Ascending aorta (tissue), 2 donors: ENCODE measurements at regions of chr14 and their contacts with region 1.

Region 1: GRCh38 chr14:67166450-67166853 is 22.8 kb upstream of the GARIN2 start:
- DNase-seq: no peak
- H3K4me3 ChIP-seq: no peak overlapping the region
- H3K27ac ChIP-seq: no peak overlapping the region
- H3K4me1 ChIP-seq: no peaks in the 10 kb centered on the region
- H3K27me3 ChIP-seq: no peaks in the 10 kb centered on the region
- CTCF ChIP-seq: peak; percentile 56 to 78 (median 58)

Region 2: GRCh38 chr14:67199016-67199415 is 32.6 kb after region 1 on chr14:
- intact Hi-C with region 1: no loop called
- DNase-seq: no peak
- H3K4me3 ChIP-seq: no peak overlapping the region
- H3K27ac ChIP-seq: no peak overlapping the region
- H3K4me1 ChIP-seq: no peaks in the 10 kb centered on the region
- H3K27me3 ChIP-seq: no peaks in the 10 kb centered on the region
- CTCF ChIP-seq: no peak

Region 3: GRCh38 chr14:67285876-67286452 is 119.5 kb after region 1 on chr14:
- intact Hi-C with region 1: loop called (anchors 1 kb)
- DNase-seq: no peak
- H3K4me3 ChIP-seq: no peak overlapping the region
- H3K27ac ChIP-seq: no peak overlapping the region
- H3K4me1 ChIP-seq: no peaks in the 10 kb centered on the region
- H3K27me3 ChIP-seq: no peaks in the 10 kb centered on the region
- CTCF ChIP-seq: peak; percentile 31 to 61 (median 54)